GM12878 (cell line): ENCODE measurements at regions of chr4 and their contacts with region 1.

Region 1: DNA sequence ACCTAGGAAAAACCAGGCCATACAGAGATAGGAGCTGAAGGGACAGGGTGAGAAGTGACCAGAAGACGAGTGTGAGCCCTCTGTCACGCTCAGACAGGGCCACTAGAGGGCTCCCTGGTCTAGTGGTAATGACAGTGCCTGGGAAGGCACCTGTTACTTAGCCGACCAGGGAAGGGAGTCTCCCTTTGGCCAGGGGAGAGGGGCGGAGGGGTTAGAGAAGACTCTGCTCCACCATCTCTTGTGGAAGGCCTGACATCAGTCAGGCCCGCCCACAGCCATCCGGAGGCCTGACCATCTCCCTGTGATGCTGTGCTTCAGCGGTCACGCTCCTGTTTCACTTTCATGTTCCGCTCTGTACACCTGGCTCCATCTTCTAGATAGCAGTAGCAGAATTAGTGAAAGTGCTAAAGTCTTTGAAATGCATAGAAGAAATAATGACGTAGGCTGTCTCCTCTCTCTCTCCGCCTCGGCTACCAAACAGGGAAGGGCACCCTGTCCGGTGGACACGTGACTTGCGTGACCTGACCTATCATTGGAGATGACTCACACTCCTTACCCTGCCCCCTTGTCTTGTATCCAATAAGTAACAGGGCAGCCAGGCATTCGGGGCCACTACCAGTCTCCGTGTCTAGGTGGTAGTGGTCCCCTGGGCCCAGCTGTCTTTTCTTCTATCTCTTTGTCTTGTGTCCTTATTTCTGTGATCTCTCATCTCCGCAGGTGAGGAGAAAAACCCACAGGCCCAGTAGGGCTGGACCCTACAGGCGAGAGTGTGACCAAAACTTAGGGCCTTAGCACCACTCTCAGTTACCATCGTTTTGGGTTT is 26.7 kb downstream of the HTT-AS start:
- DNase-seq: peak; percentile 99
- ATAC-seq: peak; percentile 95
- H3K4me3 ChIP-seq: no peak overlapping the region
- H3K27ac ChIP-seq: peak overlapping the region; percentile 86
- H3K4me1 ChIP-seq: peaks cover 38% of the 10 kb centered on the region
- H3K27me3 ChIP-seq: no peaks in the 10 kb centered on the region
- CTCF ChIP-seq: peak; percentile 68 to 81 (median 72)
- EP300 ChIP-seq: peak in 1 of 2 experiments; percentile 71; a peak in 3 of 4 replicates
- POLR2A ChIP-seq: peak; percentile 51; the same call in 1 of the 2 replicates
- RAD21 ChIP-seq: peak; percentile 93

Region 2: GRCh38 chr4:2878346-2878745 is 169.3 kb before region 1 on chr4:
- CTCF ChIA-PET with region 1: no interaction called
- POLR2A ChIA-PET with region 1: no interaction called
- RAD21 ChIA-PET with region 1: no interaction called
- SMC1A ChIA-PET with region 1: no interaction called
- in situ Hi-C with region 1: no loop called
- intact Hi-C with region 1: no loop called
- DNase-seq: no peak
- ATAC-seq: no peak
- H3K4me3 ChIP-seq: no peak overlapping the region
- H3K27ac ChIP-seq: no peak overlapping the region
- H3K4me1 ChIP-seq: no peaks in the 10 kb centered on the region
- H3K27me3 ChIP-seq: no peaks in the 10 kb centered on the region
- CTCF ChIP-seq: no peak
- EP300 ChIP-seq: no peak
- POLR2A ChIP-seq: no peak
- RAD21 ChIP-seq: no peak

Region 3: GRCh38 chr4:3062471-3062870 is 14.8 kb after region 1 on chr4:
- CTCF ChIA-PET with region 1: interaction called, 17 read pairs
- POLR2A ChIA-PET with region 1: no interaction called
- RAD21 ChIA-PET with region 1: interaction called, 3 read pairs
- SMC1A ChIA-PET with region 1: interaction called, 4 read pairs
- in situ Hi-C with region 1: no loop called
- intact Hi-C with region 1: no loop called
- DNase-seq: no peak
- ATAC-seq: no peak
- H3K4me3 ChIP-seq: no peak overlapping the region
- H3K27ac ChIP-seq: no peak overlapping the region
- H3K4me1 ChIP-seq: peaks cover 14% of the 10 kb centered on the region
- H3K27me3 ChIP-seq: no peaks in the 10 kb centered on the region
- CTCF ChIP-seq: no peak
- EP300 ChIP-seq: no peak
- POLR2A ChIP-seq: no peak
- RAD21 ChIP-seq: no peak

Region 4: GRCh38 chr4:3074078-3074795 is 26.6 kb after region 1 on chr4 and contains the starts of genes HTT and HTT-AS:
- CTCF ChIA-PET with region 1: interaction called, 4 read pairs
- POLR2A ChIA-PET with region 1: interaction called, 6 read pairs
- RAD21 ChIA-PET with region 1: interaction called, 3 read pairs
- SMC1A ChIA-PET with region 1: interaction called, 11 read pairs
- in situ Hi-C with region 1: no loop called
- intact Hi-C with region 1: loop called (anchors 1 kb)
- DNase-seq: peak; percentile 68
- ATAC-seq: peak; percentile 76
- H3K4me3 ChIP-seq: peak within 1 kb of the TSS; percentile 100
- H3K27ac ChIP-seq: peak within 1 kb of the TSS; percentile 94
- H3K4me1 ChIP-seq: peaks cover 7% of the 10 kb centered on the region
- H3K27me3 ChIP-seq: no peaks in the 10 kb centered on the region
- CTCF ChIP-seq: no peak
- EP300 ChIP-seq: no peak
- POLR2A ChIP-seq: peak; percentile 86
- RAD21 ChIP-seq: no peak
- polyA plus RNA-seq, gene HTT: 3.3 to 3.6 TPM
- polyA plus RNA-seq, gene HTT-AS: not detected

Region 5: GRCh38 chr4:3079694-3080123 is 32.0 kb after region 1 on chr4:
- CTCF ChIA-PET with region 1: interaction called, 8 read pairs
- POLR2A ChIA-PET with region 1: interaction called, 6 read pairs
- RAD21 ChIA-PET with region 1: interaction called, 8 read pairs
- SMC1A ChIA-PET with region 1: interaction called, 11 read pairs
- in situ Hi-C with region 1: loop called (anchors 5 kb)
- intact Hi-C with region 1: loop called (anchors 1 kb)
- DNase-seq: peak; percentile 54
- ATAC-seq: peak; percentile 55
- H3K4me3 ChIP-seq: peak overlapping the region; percentile 63
- H3K27ac ChIP-seq: peak overlapping the region; percentile 94
- H3K4me1 ChIP-seq: peaks cover 36% of the 10 kb centered on the region
- H3K27me3 ChIP-seq: no peaks in the 10 kb centered on the region
- CTCF ChIP-seq: no peak
- EP300 ChIP-seq: no peak
- POLR2A ChIP-seq: peak; percentile 43; the same call in 1 of the 2 replicates
- RAD21 ChIP-seq: no peak

Region 6: GRCh38 chr4:3136453-3136852 is 88.8 kb after region 1 on chr4:
- CTCF ChIA-PET with region 1: interaction called, 7 read pairs
- POLR2A ChIA-PET with region 1: no interaction called
- RAD21 ChIA-PET with region 1: no interaction called
- SMC1A ChIA-PET with region 1: no interaction called
- in situ Hi-C with region 1: no loop called
- intact Hi-C with region 1: loop called (anchors 2 kb)
- DNase-seq: no peak
- ATAC-seq: no peak
- H3K4me3 ChIP-seq: no peak overlapping the region
- H3K27ac ChIP-seq: no peak overlapping the region
- H3K4me1 ChIP-seq: no peaks in the 10 kb centered on the region
- H3K27me3 ChIP-seq: no peaks in the 10 kb centered on the region
- CTCF ChIP-seq: peak in 1 of 3 experiments; percentile 19; a peak in 2 of 6 replicates
- EP300 ChIP-seq: no peak
- POLR2A ChIP-seq: no peak
- RAD21 ChIP-seq: no peak

Region 7: DNA sequence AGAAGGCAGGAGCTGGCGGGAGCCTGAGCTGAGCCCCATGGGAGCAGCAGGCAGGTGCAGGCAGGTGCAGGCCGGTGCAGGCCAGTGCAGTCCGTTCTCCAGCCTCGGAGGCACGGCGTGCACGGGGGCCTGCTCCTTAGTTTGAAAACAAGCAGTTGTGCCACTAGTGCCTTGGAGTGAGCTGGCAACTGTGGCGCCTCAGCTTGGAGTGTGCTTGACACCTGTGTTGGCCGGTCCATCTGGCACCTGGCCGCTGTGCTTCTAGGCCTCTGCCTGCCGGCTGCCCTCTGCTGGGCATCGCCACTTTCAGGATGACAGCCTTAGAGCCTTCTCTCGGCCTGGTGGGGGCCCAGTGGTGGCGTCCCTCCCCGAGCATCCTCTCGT is 293.0 kb after region 1 on chr4:
- CTCF ChIA-PET with region 1: no interaction called
- POLR2A ChIA-PET with region 1: no interaction called
- RAD21 ChIA-PET with region 1: no interaction called
- SMC1A ChIA-PET with region 1: no interaction called
- in situ Hi-C with region 1: no loop called
- intact Hi-C with region 1: no loop called
- DNase-seq: no peak
- ATAC-seq: no peak
- H3K4me3 ChIP-seq: no peak overlapping the region
- H3K27ac ChIP-seq: no peak overlapping the region
- H3K4me1 ChIP-seq: no peaks in the 10 kb centered on the region
- H3K27me3 ChIP-seq: no peaks in the 10 kb centered on the region
- CTCF ChIP-seq: peak in 2 of 3 experiments; percentile 13 to 14; a peak in 2 of 6 replicates
- EP300 ChIP-seq: no peak
- POLR2A ChIP-seq: no peak
- RAD21 ChIP-seq: no peak

Region 8: DNA sequence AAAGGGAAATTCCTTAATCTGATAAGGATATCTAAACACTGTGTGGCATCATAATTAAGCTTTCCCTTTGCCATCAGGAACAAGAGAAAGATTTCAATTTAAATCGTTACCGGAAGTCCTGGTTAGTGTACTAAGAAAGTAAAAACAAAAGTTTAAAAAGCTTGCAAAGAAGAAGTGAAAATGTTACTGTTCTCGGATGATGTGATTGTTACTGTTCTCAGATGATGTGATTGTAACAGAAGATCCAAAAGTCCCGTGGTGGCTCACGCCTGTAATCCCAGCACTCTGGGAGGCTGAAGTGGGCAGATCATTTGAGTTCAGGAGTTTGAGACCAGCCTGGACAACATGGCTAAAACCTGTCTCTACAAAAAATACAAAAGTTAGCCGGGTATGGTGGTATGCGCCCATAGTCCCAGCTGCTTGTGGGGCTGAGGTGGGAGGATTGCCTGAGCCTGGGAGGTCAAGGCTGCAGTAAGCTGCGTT is 307.6 kb after region 1 on chr4:
- CTCF ChIA-PET with region 1: no interaction called
- POLR2A ChIA-PET with region 1: no interaction called
- RAD21 ChIA-PET with region 1: no interaction called
- SMC1A ChIA-PET with region 1: no interaction called
- in situ Hi-C with region 1: no loop called
- intact Hi-C with region 1: no loop called
- DNase-seq: peak; percentile 80
- ATAC-seq: peak; percentile 99
- H3K4me3 ChIP-seq: no peak overlapping the region
- H3K27ac ChIP-seq: peak overlapping the region; percentile 72
- H3K4me1 ChIP-seq: peaks cover 8% of the 10 kb centered on the region; the same call in 1 of the 2 replicates
- H3K27me3 ChIP-seq: no peaks in the 10 kb centered on the region
- CTCF ChIP-seq: no peak
- EP300 ChIP-seq: peak in 1 of 2 experiments; percentile 29; a peak in 2 of 4 replicates
- POLR2A ChIP-seq: no peak
- RAD21 ChIP-seq: no peak